CD14-positive monocyte (primary cell): ENCODE measurements at regions of chr19 and their contacts with region 1.

Region 1: GRCh38 chr19:31350701-31351068 is 1.4 kb upstream of the TSHZ3 start:
- DNase-seq: peak in 2 of 3 donors; percentile 18 to 22
- H3K4me3 ChIP-seq: peak overlapping the region; percentile 54 to 94 (median 94)
- H3K4me3 Mint-ChIP-seq: peak overlapping the region; percentile 93 to 97
- H3K27ac ChIP-seq: peak overlapping the region in 1 of 2 donors; percentile 57
- H3K27ac Mint-ChIP-seq: no peak overlapping the region
- H3K4me1 ChIP-seq: peaks cover 43 to 45% of the 10 kb centered on the region in 2 donors
- H3K4me1 Mint-ChIP-seq: peaks cover 53% of the 10 kb centered on the region
- H3K27me3 ChIP-seq: peaks cover 39 to 48% of the 10 kb centered on the region in 2 donors
- H3K27me3 Mint-ChIP-seq: peaks cover 48 to 66% (median 54%) of the 10 kb centered on the region in 3 donors
- CTCF ChIP-seq: no peak

Region 2: DNA sequence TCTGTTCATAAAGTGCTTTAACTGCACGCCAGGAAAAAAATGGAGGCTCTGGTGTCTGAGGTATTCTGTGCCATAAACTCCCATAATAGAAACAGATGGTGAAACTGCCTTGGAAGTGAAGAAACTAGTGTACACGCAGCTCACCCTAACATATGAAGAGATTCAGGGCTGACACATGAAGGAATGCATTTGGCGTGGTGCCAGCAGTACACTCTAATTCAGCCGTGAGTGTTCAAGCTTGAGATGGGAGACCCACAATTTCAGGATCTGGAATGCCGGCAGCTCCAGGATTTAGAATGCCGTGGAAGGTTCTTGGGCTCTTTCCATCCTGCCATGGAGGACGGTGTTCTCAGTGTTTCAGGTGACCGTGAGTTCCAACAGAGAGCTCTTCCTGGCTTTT is 479.8 kb before region 1 on chr19:
- intact Hi-C with region 1: loop called in 1 of 2 experiments (anchors 10 kb)
- DNase-seq: no peak
- H3K4me3 ChIP-seq: no peak overlapping the region
- H3K4me3 Mint-ChIP-seq: peak overlapping the region in 1 of 2 donors; percentile 37
- H3K27ac ChIP-seq: no peak overlapping the region
- H3K27ac Mint-ChIP-seq: no peak overlapping the region
- H3K4me1 ChIP-seq: no peaks in the 10 kb centered on the region
- H3K4me1 Mint-ChIP-seq: no peaks in the 10 kb centered on the region
- H3K27me3 ChIP-seq: no peaks in the 10 kb centered on the region
- H3K27me3 Mint-ChIP-seq: peaks cover 0 to 4% (median 3%) of the 10 kb centered on the region in 3 donors
- CTCF ChIP-seq: no peak

Region 3: GRCh38 chr19:31214086-31214485 is 136.6 kb before region 1 on chr19:
- intact Hi-C with region 1: loop called in 1 of 2 experiments (anchors 10 kb)
- DNase-seq: peak; percentile 76 to 95 (median 89)
- H3K4me3 ChIP-seq: peak overlapping the region in 1 of 3 experiments; percentile 42
- H3K4me3 Mint-ChIP-seq: peak overlapping the region; percentile 60 to 77
- H3K27ac ChIP-seq: no peak overlapping the region
- H3K27ac Mint-ChIP-seq: peak overlapping the region; percentile 42 to 81 (median 64)
- H3K4me1 ChIP-seq: peaks cover 10 to 13% of the 10 kb centered on the region in 2 donors
- H3K4me1 Mint-ChIP-seq: peaks cover 12% of the 10 kb centered on the region
- H3K27me3 ChIP-seq: peaks cover 10 to 37% of the 10 kb centered on the region in 2 donors
- H3K27me3 Mint-ChIP-seq: peaks cover 37 to 49% (median 43%) of the 10 kb centered on the region in 3 donors
- CTCF ChIP-seq: no peak

Region 4: DNA sequence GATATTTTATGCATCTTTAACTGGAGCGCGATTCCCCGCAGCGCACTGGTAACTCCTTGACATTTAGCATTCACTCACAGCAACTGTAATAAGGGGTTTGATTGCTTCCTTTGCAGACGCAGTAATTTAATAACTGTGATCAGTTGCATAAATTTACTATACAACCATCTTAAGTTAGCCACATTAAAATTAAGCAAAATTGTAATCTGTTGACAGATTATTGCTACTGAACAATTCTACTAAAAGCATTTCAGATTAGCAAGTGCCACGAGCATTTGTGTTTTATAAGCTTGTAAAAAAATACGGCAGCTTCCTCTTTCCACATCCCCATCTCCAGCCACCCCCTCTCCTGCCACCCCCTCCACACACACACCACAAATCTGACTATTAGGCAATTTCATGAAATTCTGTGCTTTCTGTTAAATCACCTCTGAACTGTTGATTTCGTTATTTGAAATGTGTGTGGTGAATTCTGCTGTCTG is 45.8 kb before region 1 on chr19:
- intact Hi-C with region 1: loop called (anchors 5 kb)
- DNase-seq: peak; percentile 64 to 80 (median 75)
- H3K4me3 ChIP-seq: peak overlapping the region in 1 of 3 experiments; percentile 51
- H3K4me3 Mint-ChIP-seq: peak overlapping the region; percentile 42 to 68
- H3K27ac ChIP-seq: peak overlapping the region in 1 of 2 donors; percentile 79
- H3K27ac Mint-ChIP-seq: peak overlapping the region; percentile 81 to 91 (median 85)
- H3K4me1 ChIP-seq: peaks cover 37% of the 10 kb centered on the region in 2 donors
- H3K4me1 Mint-ChIP-seq: peaks cover 46% of the 10 kb centered on the region
- H3K27me3 ChIP-seq: no peaks in the 10 kb centered on the region
- H3K27me3 Mint-ChIP-seq: peaks cover 0 to 1% (median 0%) of the 10 kb centered on the region in 3 donors
- CTCF ChIP-seq: no peak

Region 5: DNA sequence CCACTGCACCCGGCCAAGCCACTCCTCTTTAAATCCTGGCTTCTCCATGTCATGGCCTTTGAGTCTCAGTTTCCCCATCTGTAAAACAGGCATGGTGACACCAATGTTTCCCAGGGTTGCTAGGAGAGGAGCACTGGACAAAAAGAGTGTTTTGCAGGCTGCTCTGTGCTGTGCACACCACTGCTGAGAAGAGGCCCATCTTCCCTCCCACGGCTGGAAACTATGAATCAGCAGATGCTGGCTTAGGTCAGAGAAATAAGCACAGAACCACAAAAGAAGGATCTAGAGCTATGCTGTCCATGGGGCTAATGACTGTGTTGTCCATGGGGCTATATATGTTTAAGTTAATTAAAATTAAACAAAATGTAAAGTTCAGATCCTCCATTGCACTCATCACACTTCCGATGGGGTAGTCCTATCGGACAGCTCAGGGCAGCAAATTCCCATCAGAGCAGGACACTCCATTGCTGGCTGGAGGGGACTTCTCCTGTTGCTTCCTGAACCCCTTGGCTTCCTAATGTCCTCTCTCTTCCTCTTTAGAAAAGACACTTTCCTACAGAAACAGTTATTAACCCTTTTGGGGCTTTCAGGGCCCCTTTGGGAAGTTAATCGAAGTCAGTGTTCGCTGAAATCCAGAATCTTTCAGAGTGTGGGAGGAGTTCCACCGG is 38.5 kb before region 1 on chr19:
- intact Hi-C with region 1: loop called (anchors 5 kb)
- DNase-seq: peak; percentile 33 to 60 (median 52)
- H3K4me3 ChIP-seq: peak overlapping the region in 1 of 3 experiments; percentile 39
- H3K4me3 Mint-ChIP-seq: peak overlapping the region; percentile 39 to 57
- H3K27ac ChIP-seq: peak overlapping the region; percentile 58 to 70
- H3K27ac Mint-ChIP-seq: peak overlapping the region; percentile 50 to 93 (median 86)
- H3K4me1 ChIP-seq: peaks cover 75 to 80% of the 10 kb centered on the region in 2 donors
- H3K4me1 Mint-ChIP-seq: peaks cover 82% of the 10 kb centered on the region
- H3K27me3 ChIP-seq: no peaks in the 10 kb centered on the region
- H3K27me3 Mint-ChIP-seq: no peaks in the 10 kb centered on the region
- CTCF ChIP-seq: no peak

Region 6: GRCh38 chr19:31392464-31392863 is 41.8 kb after region 1 on chr19:
- intact Hi-C with region 1: no loop called
- DNase-seq: no peak
- H3K4me3 ChIP-seq: no peak overlapping the region
- H3K4me3 Mint-ChIP-seq: no peak overlapping the region
- H3K27ac ChIP-seq: no peak overlapping the region
- H3K27ac Mint-ChIP-seq: no peak overlapping the region
- H3K4me1 ChIP-seq: no peaks in the 10 kb centered on the region
- H3K4me1 Mint-ChIP-seq: no peaks in the 10 kb centered on the region
- H3K27me3 ChIP-seq: no peaks in the 10 kb centered on the region
- H3K27me3 Mint-ChIP-seq: peaks cover 5 to 7% (median 6%) of the 10 kb centered on the region in 3 donors
- CTCF ChIP-seq: no peak

Region 7: DNA sequence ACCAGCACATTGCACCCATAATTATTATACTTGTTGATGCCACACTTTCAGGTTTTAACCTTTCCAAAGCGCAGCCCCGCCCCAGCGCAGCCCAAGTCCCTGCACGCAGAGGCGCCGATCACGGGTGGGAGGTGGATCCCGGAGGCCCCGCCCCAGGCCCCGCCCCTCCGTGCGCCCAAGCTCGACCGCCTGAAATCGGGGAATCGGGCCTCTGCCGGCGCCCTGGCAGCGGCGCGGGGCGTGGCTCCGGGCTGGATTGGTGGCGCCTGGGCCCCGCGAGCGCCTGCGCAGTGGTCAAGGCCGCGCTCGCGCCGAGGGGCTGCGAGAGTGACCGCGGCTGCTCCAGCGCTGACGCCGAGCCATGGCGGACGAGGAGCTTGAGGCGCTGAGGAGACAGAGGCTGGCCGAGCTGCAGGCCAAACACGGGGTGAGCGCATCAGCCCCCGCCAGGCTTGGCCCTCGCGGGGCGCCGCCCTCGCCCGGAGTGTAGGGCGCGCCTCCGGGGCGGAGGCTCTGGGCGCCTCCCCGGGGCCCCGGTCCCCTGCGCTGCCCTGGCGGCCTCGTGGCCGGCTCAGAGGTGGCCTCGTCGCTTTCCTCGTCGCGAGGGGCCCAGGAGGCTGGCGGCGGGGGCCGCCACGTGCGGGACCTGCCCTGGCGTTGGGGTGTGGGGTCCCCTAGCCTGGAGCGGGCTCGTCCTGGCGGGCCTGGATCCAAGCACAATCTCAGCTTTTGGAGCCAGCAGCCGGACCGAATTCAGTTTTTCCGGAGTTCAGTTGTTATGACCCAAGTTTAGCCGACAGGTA is 1230.4 kb after region 1 on chr19 and contains the start of gene PDCD5:
- intact Hi-C with region 1: loop called in 1 of 2 experiments (anchors 5 kb)
- DNase-seq: peak; percentile 89 to 93 (median 93)
- H3K4me3 ChIP-seq: peak within 1 kb of the TSS; percentile 42 to 73 (median 52)
- H3K4me3 Mint-ChIP-seq: peak within 1 kb of the TSS; percentile 82 to 96
- H3K27ac ChIP-seq: peak within 1 kb of the TSS; percentile 13 to 81
- H3K27ac Mint-ChIP-seq: peak within 1 kb of the TSS; percentile 33 to 88 (median 80)
- H3K4me1 ChIP-seq: peaks cover 16 to 24% of the 10 kb centered on the region in 2 donors
- H3K4me1 Mint-ChIP-seq: peaks cover 17% of the 10 kb centered on the region
- H3K27me3 ChIP-seq: peaks cover 0 to 3% of the 10 kb centered on the region in 2 donors
- H3K27me3 Mint-ChIP-seq: peaks cover 9 to 15% (median 13%) of the 10 kb centered on the region in 3 donors
- CTCF ChIP-seq: no peak
- polyA plus RNA-seq, gene PDCD5: 41.4 to 84.5 (median 79.9) TPM